Caco-2 (cell line): ENCODE measurements at regions of chr12 and their contacts with region 1.

Region 1: GRCh38 chr12:52924764-52925716 is 20.2 kb upstream of the KRT8 start:
- DNase-seq: peak; percentile 92 to 96
- H3K4me3 ChIP-seq: peak overlapping the region; percentile 13
- H3K4me3 Mint-ChIP-seq: peak overlapping the region; percentile 64
- H3K27ac Mint-ChIP-seq: peak overlapping the region; percentile 98
- H3K4me1 ChIP-seq: peaks cover 80% of the 10 kb centered on the region
- H3K4me1 Mint-ChIP-seq: peaks cover 56% of the 10 kb centered on the region
- H3K27me3 ChIP-seq: no peaks in the 10 kb centered on the region
- H3K27me3 Mint-ChIP-seq: no peaks in the 10 kb centered on the region
- CTCF ChIP-seq: no peak

Region 2: GRCh38 chr12:52884526-52885293 is 40.3 kb before region 1 on chr12:
- CTCF ChIA-PET with region 1: interaction called, 12 read pairs
- POLR2A ChIA-PET with region 1: interaction called, 4 read pairs
- intact Hi-C with region 1: loop called (anchors 1 kb)
- DNase-seq: peak; percentile 89 to 92
- H3K4me3 ChIP-seq: peak overlapping the region; percentile 15; the same call in 1 of the 2 replicates
- H3K4me3 Mint-ChIP-seq: peak overlapping the region; percentile 68
- H3K27ac Mint-ChIP-seq: peak overlapping the region; percentile 95
- H3K4me1 ChIP-seq: peaks cover 55% of the 10 kb centered on the region
- H3K4me1 Mint-ChIP-seq: peaks cover 22% of the 10 kb centered on the region
- H3K27me3 ChIP-seq: no peaks in the 10 kb centered on the region
- H3K27me3 Mint-ChIP-seq: no peaks in the 10 kb centered on the region
- CTCF ChIP-seq: peak; percentile 93 to 97

Region 3: DNA sequence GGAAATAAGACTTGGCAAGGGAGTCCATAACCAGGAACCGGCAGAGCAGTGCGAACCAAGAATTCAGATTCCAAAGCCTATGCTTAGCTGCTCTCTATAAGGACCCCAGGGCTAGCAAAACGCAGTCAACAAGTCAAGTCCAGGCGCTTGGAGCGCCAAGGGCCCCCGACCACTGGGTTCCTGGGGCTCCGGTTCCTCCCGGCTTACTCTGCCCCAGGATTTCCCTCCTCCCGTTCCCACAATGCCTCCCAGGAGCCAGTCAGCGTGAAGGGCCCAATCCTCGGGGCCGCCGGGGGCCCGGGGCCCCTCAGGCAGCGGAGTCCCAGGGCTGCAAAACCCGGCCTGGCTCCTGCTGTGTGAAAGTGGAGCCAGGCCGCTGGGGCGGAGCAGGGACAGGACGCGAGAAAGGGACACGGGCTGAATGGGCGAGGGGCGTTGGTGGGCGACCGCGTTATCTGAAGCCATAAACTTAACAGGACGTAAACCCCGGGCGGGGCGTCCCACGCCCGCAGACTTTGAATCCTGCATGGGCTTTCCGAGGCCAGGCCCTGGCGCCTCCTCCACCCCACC is 21.7 kb before region 1 on chr12:
- CTCF ChIA-PET with region 1: interaction called, 62 read pairs
- POLR2A ChIA-PET with region 1: interaction called, 231 read pairs
- intact Hi-C with region 1: loop called (anchors 1 kb)
- DNase-seq: peak in 1 of 2 experiments; percentile 61
- H3K4me3 ChIP-seq: peak overlapping the region; percentile 99
- H3K4me3 Mint-ChIP-seq: peak overlapping the region; percentile 95
- H3K27ac Mint-ChIP-seq: peak overlapping the region; percentile 98
- H3K4me1 ChIP-seq: peaks cover 72% of the 10 kb centered on the region
- H3K4me1 Mint-ChIP-seq: peaks cover 54% of the 10 kb centered on the region
- H3K27me3 ChIP-seq: no peaks in the 10 kb centered on the region
- H3K27me3 Mint-ChIP-seq: peaks cover 3% of the 10 kb centered on the region
- CTCF ChIP-seq: no peak

Region 4: DNA sequence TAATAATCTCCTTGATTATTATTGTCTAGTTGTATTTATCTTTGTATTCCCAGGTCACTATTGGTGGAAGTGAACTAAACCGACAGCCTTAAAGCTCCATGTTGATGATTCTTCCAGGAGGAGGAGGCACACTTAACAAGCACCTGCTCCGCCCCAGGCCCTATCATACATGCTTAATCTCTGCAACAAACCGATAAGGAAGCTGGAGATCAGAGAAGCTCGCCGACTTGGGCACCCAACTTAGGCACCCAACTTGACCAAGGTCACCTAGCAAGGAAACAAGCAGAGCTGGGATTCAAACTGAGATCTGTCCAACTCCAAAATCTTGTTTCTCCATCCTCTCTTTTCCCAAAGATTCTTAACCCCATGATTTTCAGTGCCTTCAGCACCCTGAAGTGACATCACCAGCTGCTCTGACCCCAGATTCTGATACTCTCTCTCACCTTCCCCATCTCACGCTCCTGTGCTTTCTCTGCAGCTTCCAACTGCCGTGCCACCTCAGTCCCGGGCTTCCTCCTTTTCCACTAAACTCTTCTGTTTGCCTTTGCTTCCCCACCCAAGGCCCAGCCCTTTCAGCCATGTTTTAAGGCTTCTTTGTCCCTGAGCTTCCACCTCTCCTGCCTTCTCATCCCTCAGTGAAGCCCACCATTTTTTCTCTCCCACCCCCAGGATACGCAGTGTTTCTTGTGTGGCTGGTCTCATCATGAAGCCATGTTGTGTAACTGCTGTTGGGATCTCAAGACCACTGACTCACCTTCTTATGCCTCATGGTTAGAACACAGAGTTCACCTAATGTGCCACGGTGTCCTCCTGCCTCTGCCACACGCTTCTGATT is 17.2 kb after region 1 on chr12:
- CTCF ChIA-PET with region 1: interaction called, 71 read pairs
- POLR2A ChIA-PET with region 1: interaction called, 457 read pairs
- intact Hi-C with region 1: loop called (anchors 1 kb)
- DNase-seq: peak; percentile 81 to 91
- H3K4me3 ChIP-seq: no peak overlapping the region
- H3K4me3 Mint-ChIP-seq: peak overlapping the region; percentile 27
- H3K27ac Mint-ChIP-seq: peak overlapping the region; percentile 99
- H3K4me1 ChIP-seq: peaks cover 58% of the 10 kb centered on the region
- H3K4me1 Mint-ChIP-seq: peaks cover 40% of the 10 kb centered on the region
- H3K27me3 ChIP-seq: no peaks in the 10 kb centered on the region
- H3K27me3 Mint-ChIP-seq: no peaks in the 10 kb centered on the region
- CTCF ChIP-seq: no peak

Region 5: GRCh38 chr12:52969828-52970569 is 45.0 kb after region 1 on chr12:
- CTCF ChIA-PET with region 1: interaction called, 16 read pairs
- POLR2A ChIA-PET with region 1: interaction called, 94 read pairs
- intact Hi-C with region 1: loop called (anchors 1 kb)
- DNase-seq: peak; percentile 93 to 96
- H3K4me3 ChIP-seq: no peak overlapping the region
- H3K4me3 Mint-ChIP-seq: peak overlapping the region; percentile 69
- H3K27ac Mint-ChIP-seq: peak overlapping the region; percentile 98
- H3K4me1 ChIP-seq: peaks cover 70% of the 10 kb centered on the region
- H3K4me1 Mint-ChIP-seq: peaks cover 55% of the 10 kb centered on the region
- H3K27me3 ChIP-seq: no peaks in the 10 kb centered on the region
- H3K27me3 Mint-ChIP-seq: no peaks in the 10 kb centered on the region
- CTCF ChIP-seq: no peak